ENCODE measurements at regions of chr14 and their contacts with region 1.

Region 1: GRCh38 chr14:76767681-76768656 is 6.7 kb downstream of the VASH1 start:
- DNase-seq: peak; percentile 90

Region 2: DNA sequence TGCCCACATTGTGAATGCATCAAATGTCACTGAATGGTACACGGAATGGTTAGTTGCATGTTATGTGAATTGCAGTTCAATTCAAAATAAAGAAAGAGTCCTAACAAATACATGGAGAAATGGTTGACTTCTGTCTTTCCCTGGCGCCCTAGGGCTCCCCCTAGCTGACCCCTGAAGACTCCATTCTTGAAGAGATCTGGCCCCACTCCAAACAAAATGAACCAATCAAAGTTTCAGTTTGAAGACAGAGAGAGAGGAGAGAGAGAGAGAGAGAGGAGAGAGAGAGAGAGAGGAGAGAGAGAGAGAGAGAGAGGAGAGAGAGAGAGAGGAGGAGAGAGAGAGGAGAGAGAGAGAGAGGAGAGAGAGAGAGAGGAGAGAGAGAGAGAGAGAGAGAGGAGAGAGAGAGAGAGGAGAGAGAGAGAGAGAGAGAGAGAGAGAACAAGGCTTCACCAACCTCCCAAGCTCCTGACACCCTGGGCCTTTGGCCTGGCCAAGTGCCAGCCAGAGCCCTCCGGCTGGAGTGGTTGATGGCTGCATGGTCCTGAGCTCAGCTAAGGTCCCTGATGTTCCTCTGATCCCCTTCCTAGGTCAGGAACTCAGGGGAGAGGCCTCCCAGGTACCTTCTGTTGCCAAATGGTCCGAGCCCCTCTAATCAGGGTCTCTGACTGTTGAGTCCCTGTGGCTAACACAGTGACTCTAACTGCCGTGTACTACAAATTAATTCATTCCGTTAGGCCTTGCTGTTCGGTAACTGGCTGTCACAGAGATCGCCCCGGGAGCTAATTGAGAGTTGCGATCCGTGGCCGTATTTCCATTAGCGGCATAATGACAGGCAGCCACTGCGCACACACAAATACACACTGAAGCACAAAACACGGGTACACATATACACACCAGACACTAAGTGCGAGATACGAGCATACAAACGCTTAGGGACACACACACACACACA is 203.2 kb before region 1 on chr14:
- intact Hi-C with region 1: no loop called
- DNase-seq: no peak

Region 3: DNA sequence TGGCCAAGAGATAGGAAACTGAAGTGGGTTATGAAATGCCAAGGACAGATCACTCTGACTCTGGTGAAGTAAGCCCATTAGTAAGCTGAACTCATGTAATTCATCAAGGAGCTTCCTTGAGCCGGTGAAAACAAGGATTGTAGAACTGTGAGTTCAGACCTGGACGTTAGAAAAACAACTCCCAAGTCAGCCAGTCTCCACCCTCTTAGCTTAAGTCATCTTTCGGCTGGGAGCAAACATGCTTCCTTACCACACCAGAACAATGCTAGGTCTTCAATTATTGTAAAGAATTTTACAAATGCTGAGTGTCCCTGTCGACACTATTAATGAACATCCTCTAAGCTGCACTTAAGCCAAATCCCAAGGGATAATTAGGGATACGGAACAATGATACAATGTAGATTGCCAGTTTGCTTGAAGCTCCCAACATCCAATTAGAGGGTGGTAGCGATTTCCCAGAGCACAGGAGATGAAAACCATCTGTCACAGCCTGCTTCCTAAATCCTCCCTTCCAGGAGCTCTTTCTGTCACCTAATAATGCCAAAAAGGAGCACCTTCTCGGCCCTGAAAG is 52.4 kb before region 1 on chr14:
- intact Hi-C with region 1: loop called (anchors 5 kb)
- DNase-seq: no peak

Region 4: GRCh38 chr14:76872796-76873432 is 104.9 kb after region 1 on chr14:
- intact Hi-C with region 1: no loop called
- DNase-seq: peak; percentile 83

Region 5: GRCh38 chr14:78512021-78512420 is 1744.1 kb after region 1 on chr14:
- intact Hi-C with region 1: no loop called
- DNase-seq: no peak